ENCODE measurements at regions of chr15 and their contacts with region 1.

Region 1: GRCh38 chr15:61834076-61834697 is 226.1 kb downstream of the VPS13C start:
- DNase-seq: peak; percentile 1
- H3K4me3 ChIP-seq: no peak overlapping the region
- H3K27me3 ChIP-seq: no peaks in the 10 kb centered on the region
- CTCF ChIP-seq: peak; percentile 98

Region 2: GRCh38 chr15:60507596-60508424 is 1326.4 kb before region 1 on chr15:
- CTCF ChIA-PET with region 1: interaction called, 27 read pairs
- POLR2A ChIA-PET with region 1: no interaction called
- DNase-seq: peak; percentile 22
- H3K4me3 ChIP-seq: no peak overlapping the region
- H3K27me3 ChIP-seq: no peaks in the 10 kb centered on the region
- CTCF ChIP-seq: peak; percentile 91

Region 3: DNA sequence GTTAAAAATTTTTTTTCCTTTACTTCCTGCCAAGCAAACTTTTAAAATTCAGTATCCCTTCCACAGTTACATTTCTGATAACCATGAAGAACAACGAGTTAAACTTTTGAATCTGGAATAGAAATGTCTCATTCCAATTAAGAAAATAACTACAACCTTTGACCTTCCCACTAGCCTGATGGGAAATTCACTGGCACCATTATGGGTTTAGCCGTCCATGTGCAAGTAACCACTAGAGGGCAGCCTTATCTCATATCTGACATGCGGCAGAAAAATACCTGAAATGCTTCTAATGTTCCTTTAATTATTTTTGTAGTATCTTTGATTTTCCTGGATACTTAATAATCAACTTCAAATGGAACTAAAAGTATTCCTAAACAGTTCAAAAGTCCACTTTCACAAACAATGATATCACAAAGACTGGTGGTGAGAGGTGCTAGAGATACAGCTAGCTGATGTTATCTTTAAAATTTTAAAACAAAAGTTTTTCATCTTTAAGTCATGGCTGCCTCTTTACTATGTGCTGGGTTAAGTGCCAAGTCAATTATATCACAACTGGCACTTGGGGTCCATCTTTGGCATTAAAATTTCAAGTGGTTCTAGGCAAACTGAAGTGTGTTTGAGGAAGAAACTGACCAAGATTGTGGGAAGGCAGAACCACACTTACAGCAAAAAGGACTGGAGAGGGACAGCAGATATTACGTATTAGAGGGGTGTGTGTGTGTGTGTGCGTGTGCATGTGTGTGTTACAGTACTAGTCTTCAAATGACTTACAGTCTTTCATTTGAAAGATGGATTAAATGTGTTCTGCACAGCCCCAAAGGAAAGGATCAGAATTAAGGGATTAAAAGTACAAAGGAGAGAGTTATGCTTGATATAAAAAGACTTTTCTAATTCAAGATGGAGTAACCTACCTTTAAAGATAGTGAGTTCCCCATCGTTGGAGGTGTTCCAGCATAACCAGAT is 1248.2 kb before region 1 on chr15:
- CTCF ChIA-PET with region 1: interaction called, 11 read pairs
- POLR2A ChIA-PET with region 1: interaction called, 3 read pairs
- DNase-seq: no peak
- H3K4me3 ChIP-seq: no peak overlapping the region
- H3K27me3 ChIP-seq: 0 out of 2 replicates have a peak, but pooled peaks cover 1% of the 10 kb centered on the region
- CTCF ChIP-seq: peak; percentile 79

Region 4: GRCh38 chr15:61195116-61196002 is 638.8 kb before region 1 on chr15:
- CTCF ChIA-PET with region 1: interaction called, 27 read pairs
- POLR2A ChIA-PET with region 1: no interaction called
- DNase-seq: no peak
- H3K4me3 ChIP-seq: no peak overlapping the region
- H3K27me3 ChIP-seq: no peaks in the 10 kb centered on the region
- CTCF ChIP-seq: peak; percentile 77

Region 5: GRCh38 chr15:61819386-61819785 is 14.8 kb before region 1 on chr15:
- CTCF ChIA-PET with region 1: interaction called, 16 read pairs
- POLR2A ChIA-PET with region 1: no interaction called
- DNase-seq: no peak
- H3K4me3 ChIP-seq: no peak overlapping the region
- H3K27me3 ChIP-seq: no peaks in the 10 kb centered on the region; the same call in 1 of the 2 replicates
- CTCF ChIP-seq: no peak

Region 6: DNA sequence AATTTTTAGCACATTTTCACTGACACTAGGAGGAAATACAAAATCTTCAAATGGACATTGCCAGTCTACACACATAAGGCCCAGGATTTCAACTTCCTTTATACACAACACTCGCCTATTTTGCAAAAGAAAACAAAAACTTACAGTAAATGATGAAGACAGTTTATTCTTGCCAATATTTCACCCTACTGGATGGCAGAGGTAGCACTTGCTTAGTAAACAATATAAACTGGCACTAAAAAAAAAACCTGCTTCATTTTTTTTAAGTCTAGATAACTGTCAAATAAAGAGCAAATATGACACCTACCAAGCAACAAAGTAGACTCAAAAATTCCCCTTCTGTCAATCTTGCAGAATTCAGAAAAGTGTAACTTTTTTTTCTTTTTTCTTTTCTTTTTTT is 22.1 kb after region 1 on chr15:
- CTCF ChIA-PET with region 1: interaction called, 28 read pairs
- POLR2A ChIA-PET with region 1: no interaction called
- DNase-seq: no peak
- H3K4me3 ChIP-seq: no peak overlapping the region
- H3K27me3 ChIP-seq: no peaks in the 10 kb centered on the region
- CTCF ChIP-seq: no peak

Region 7: GRCh38 chr15:61861962-61862361 is 27.8 kb after region 1 on chr15:
- CTCF ChIA-PET with region 1: interaction called, 28 read pairs
- POLR2A ChIA-PET with region 1: no interaction called
- DNase-seq: no peak
- H3K4me3 ChIP-seq: no peak overlapping the region
- H3K27me3 ChIP-seq: no peaks in the 10 kb centered on the region
- CTCF ChIP-seq: no peak

Measured in BJ (cell line).